Common myeloid progenitor, CD34-positive (primary cell): ENCODE measurements at regions of chr9 and their contacts with region 1.

Region 1: GRCh38 chr9:96206156-96206751 is 95.7 kb downstream of the HSD17B3 start:
- DNase-seq: no peak
- H3K4me3 ChIP-seq: no peak overlapping the region
- H3K27ac ChIP-seq: no peak overlapping the region
- H3K4me1 ChIP-seq: no peaks in the 10 kb centered on the region
- H3K27me3 ChIP-seq: peaks cover 0 to 2% (median 0%) of the 10 kb centered on the region in 5 experiments

Region 2: DNA sequence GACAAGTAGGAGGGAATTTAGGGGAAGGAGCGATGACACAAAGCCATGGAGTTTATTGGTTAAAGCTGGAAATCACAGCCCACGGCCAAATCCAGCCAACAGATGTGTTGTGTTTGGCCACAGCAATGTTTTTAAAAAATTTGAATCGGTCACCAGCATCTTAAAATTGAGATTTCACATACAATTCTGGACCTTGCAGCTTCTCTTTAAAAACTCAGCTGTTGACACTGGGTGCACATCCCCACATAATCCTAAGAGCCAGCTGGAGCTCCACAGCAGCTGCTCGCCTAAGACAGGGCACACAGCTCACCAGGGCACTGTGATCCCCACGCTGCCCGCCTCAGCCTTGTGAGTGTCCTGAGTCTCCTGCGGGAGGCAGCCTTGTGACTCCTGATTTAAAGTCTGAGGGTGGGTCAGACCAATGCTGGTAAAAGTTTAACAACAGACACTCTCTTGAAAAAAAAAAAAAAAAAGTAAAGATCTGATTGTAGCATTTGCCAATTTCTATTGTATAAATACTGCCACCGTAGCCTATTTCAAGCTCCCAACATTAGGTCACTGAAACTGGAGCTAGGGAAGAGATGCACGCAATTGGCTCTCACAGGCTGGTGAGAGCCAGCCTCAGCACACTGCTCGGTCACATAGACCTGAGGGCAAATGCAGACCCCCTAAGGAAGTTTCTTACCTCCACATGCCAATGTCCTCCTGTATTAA is 29.1 kb before region 1 on chr9:
- CTCF ChIA-PET with region 1: no interaction called
- POLR2A ChIA-PET with region 1: no interaction called
- DNase-seq: no peak
- H3K4me3 ChIP-seq: no peak overlapping the region
- H3K27ac ChIP-seq: no peak overlapping the region
- H3K4me1 ChIP-seq: no peaks in the 10 kb centered on the region
- H3K27me3 ChIP-seq: peaks cover 0 to 55% (median 20%) of the 10 kb centered on the region in 5 experiments

Region 3: GRCh38 chr9:96217754-96218693 is 11.8 kb after region 1 on chr9:
- CTCF ChIA-PET with region 1: interaction called, 18 read pairs
- POLR2A ChIA-PET with region 1: no interaction called
- DNase-seq: peak; percentile 65 to 81 (median 77)
- H3K4me3 ChIP-seq: peak overlapping the region in 6 of 7 experiments; percentile 17 to 68 (median 44)
- H3K27ac ChIP-seq: no peak overlapping the region
- H3K4me1 ChIP-seq: peaks cover 2 to 15% (median 12%) of the 10 kb centered on the region in 4 experiments
- H3K27me3 ChIP-seq: peaks cover 0 to 82% (median 21%) of the 10 kb centered on the region in 5 experiments

Region 4: DNA sequence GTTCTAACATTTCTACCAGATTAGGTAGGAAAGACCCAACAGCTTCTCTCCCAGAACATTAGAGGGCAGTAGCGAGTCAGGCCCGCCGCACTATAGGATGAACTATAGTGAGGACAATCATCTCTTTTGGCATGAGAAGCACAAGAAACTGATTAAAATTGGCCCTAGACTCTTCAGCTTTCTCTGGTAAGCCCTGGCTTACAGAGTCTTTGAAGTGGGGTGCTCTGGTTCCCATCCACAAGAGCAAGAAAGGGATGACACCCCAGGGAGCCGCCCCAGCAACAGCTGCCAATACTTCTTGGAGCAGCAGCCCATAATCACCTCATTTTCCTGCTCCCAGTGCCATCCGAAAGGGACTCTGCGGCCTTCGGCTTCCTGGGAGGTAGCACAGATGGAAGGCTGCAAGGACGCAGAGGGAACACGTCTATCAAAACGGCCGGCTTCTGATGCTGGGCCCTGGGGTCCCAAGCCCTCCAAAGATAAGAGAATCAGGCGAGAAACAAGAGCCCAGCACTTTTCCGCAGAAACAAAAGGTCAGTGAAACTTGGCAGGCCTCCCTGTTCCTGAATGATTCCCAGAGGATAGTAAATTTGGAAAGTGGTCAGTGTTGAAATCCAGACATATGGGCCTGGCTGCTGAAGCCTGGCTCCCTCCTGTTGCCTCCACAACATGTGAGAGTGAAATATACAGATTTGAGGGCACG is 26.4 kb after region 1 on chr9:
- CTCF ChIA-PET with region 1: no interaction called
- POLR2A ChIA-PET with region 1: no interaction called
- DNase-seq: peak; percentile 26 to 64 (median 63)
- H3K4me3 ChIP-seq: no peak overlapping the region
- H3K27ac ChIP-seq: no peak overlapping the region
- H3K4me1 ChIP-seq: no peaks in the 10 kb centered on the region
- H3K27me3 ChIP-seq: peaks cover 0 to 48% (median 24%) of the 10 kb centered on the region in 5 experiments